H1 (cell line): ENCODE measurements at regions of chr15 and their contacts with region 1.

Region 1: DNA sequence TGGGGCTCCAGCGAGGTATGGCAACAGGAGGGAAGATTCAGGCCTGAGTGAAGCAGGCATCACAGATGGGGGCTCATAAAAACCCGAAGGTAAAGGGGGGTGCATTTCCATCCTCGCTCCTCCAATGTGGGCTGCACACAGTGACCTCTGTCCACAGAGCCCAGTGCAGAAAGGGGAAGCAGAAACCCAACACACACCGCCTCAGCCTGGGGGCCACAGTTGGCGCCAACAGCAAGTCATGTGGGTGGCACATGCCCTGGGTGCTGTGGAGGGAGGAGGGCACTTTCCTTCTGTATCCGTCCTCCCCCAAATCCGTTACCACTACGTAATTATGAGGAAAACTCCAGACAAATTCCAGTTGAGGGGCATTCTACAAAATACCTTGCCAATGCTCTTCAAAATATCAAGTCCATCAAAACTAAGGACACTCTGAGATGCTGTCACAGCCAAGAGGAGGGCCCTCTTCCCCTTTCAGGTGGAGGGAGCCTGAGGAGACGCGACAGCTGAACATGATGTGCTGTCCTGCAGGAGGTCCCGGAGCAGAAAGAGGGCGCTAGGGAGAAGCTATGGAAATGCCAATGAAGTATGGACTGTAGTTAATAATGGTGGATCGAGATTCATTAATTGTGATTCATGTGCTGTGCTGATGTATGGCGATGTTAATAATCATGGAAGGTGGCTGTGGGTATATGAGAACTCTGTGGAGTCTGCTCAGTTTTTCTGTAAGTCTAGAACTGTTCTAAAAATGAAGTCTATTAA is 16.4 kb downstream of the APBA2 start:
- DNase-seq: no peak
- H3K4me3 ChIP-seq: no peak overlapping the region
- H3K27ac ChIP-seq: no peak overlapping the region
- H3K4me1 ChIP-seq: no peaks in the 10 kb centered on the region; a peak in 2 of 7 replicates
- H3K27me3 ChIP-seq: no peaks in the 10 kb centered on the region
- CTCF ChIP-seq: peak; percentile 56 to 80 (median 69)
- EP300 ChIP-seq: no peak
- POLR2A ChIP-seq: no peak
- RAD21 ChIP-seq: peak; percentile 17 to 45; a peak in 2 of 4 replicates

Region 2: GRCh38 chr15:28786521-28786920 is 115.6 kb before region 1 on chr15:
- CTCF ChIA-PET with region 1: no interaction called
- POLR2A ChIA-PET with region 1: no interaction called
- DNase-seq: no peak
- H3K4me3 ChIP-seq: no peak overlapping the region
- H3K27ac ChIP-seq: no peak overlapping the region
- H3K4me1 ChIP-seq: no peaks in the 10 kb centered on the region; a peak in 2 of 7 replicates
- H3K27me3 ChIP-seq: no peaks in the 10 kb centered on the region
- CTCF ChIP-seq: no peak
- EP300 ChIP-seq: no peak
- POLR2A ChIP-seq: no peak
- RAD21 ChIP-seq: no peak

Region 3: DNA sequence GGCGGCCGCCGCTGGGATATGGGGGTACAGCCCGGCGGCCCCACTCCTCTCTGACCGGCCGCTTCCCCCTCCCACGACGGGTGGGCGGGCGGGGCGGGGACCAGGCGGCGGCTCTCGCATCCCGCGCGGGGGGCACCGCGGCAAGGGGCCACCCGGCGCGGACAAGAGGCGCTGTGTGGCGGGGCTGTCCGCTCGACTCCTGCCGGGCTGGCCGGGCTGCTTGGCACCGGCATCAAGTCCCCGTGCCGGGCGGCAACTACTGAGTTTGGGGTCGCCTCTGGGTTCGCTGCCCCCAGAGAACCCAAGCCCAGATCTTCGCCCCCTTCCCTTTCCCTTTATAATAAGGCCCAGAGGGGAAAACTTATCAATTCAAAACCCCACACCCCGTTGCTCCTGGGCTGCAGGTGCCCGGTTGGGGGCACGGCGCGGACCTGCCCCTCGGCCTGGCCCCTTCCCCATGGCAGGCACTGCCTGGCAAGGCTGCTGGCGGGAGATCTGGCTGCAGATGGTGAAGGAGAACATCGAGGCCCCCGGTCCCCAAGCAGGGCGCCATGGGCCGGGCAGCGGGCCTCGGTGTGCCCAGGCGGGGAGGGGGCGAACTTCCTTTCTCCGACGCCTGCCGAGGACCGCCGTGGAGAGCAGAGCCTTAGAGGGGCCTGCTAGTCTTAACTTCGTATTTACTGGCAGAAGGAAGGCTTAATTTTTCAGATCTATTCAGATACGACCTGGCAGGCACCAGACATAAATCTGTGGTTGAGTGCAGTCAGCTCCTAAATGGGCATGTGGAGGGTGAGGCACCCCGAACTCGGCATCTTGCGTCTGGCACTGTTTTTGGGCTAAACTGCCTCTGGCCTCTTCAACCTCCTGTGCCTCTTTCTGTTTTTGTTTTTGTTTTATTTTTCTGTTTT is 15.5 kb before region 1 on chr15:
- CTCF ChIA-PET with region 1: interaction called, 20 read pairs
- POLR2A ChIA-PET with region 1: interaction called, 5 read pairs
- DNase-seq: no peak
- H3K4me3 ChIP-seq: peak overlapping the region; percentile 48 to 63 (median 52)
- H3K27ac ChIP-seq: no peak overlapping the region
- H3K4me1 ChIP-seq: peaks cover 0 to 8% (median 4%) of the 10 kb centered on the region in 4 experiments; a peak in 4 of 7 replicates
- H3K27me3 ChIP-seq: peaks cover 7 to 34% (median 29%) of the 10 kb centered on the region in 4 experiments; a peak in 6 of 7 replicates
- CTCF ChIP-seq: no peak
- EP300 ChIP-seq: no peak
- POLR2A ChIP-seq: no peak
- RAD21 ChIP-seq: no peak

Region 4: GRCh38 chr15:28913171-28913765 is 11.1 kb after region 1 on chr15:
- CTCF ChIA-PET with region 1: interaction called, 51 read pairs
- POLR2A ChIA-PET with region 1: no interaction called
- DNase-seq: no peak
- H3K4me3 ChIP-seq: no peak overlapping the region
- H3K27ac ChIP-seq: no peak overlapping the region
- H3K4me1 ChIP-seq: peaks cover 8 to 23% (median 13%) of the 10 kb centered on the region in 4 experiments
- H3K27me3 ChIP-seq: no peaks in the 10 kb centered on the region
- CTCF ChIP-seq: peak in 2 of 3 experiments; percentile 25 to 32; a peak in 2 of 4 replicates
- EP300 ChIP-seq: no peak
- POLR2A ChIP-seq: no peak
- RAD21 ChIP-seq: peak in 1 of 2 experiments; percentile 35; a peak in 2 of 4 replicates